ENCODE measurements at regions of chr6 and their contacts with region 1.

Region 1: DNA sequence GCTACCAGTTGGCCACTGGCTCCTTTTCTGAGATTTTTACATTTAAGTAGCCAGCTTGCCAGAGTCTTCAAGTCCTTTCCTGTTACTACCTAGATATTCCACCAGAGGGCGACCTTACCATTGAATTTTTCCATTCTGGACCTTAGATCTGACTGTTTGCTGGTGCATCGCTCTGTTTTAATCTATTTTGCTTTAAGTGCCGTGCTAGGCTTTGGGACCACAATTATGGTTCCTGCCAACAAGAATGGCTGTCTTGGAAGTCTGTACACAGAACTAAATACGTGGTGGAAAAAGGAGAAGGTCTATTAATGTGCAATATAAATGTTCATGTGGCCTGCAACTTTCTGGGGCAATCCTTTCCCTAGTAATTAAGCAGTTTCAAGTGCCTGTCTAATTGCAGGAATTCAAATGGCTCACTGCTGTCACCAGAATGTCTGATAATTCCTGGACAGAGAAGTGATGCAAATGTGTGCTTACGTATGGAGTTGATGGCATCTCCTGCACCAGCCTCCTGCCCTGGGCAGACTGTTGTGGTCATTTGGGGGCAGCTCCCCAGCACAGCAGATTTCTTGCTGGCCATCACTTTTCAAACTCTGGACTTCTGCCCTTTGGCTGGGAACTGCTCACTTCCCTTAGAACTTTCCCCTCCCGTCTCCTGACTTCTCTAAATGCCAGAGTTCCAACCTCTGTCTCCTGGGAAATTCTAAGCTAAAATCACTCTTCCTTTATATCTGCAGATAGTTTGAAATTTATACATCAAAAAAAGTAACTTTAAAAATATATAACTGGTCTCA is 5.6 kb upstream of the HLA-DOA start:
- DNase-seq: peak in 1 of 2 donors; percentile 66
- H3K4me3 ChIP-seq: no peak overlapping the region
- CTCF ChIP-seq: peak in 1 of 3 donors; percentile 62
- POLR2A ChIP-seq: no peak

Region 2: GRCh38 chr6:33000055-33000454 is 15.0 kb before region 1 on chr6:
- intact Hi-C with region 1: no loop called
- DNase-seq: no peak
- H3K4me3 ChIP-seq: no peak overlapping the region
- CTCF ChIP-seq: no peak
- POLR2A ChIP-seq: no peak

Region 3: GRCh38 chr6:33147807-33148666 is 133.0 kb after region 1 on chr6:
- intact Hi-C with region 1: loop called (anchors 10 kb)
- DNase-seq: no peak
- H3K4me3 ChIP-seq: no peak overlapping the region
- CTCF ChIP-seq: no peak
- POLR2A ChIP-seq: no peak

Region 4: GRCh38 chr6:33248925-33249731 is 234.1 kb after region 1 on chr6:
- intact Hi-C with region 1: loop called (anchors 10 kb)
- DNase-seq: peak; percentile 98 to 99
- H3K4me3 ChIP-seq: peak overlapping the region; percentile 44
- CTCF ChIP-seq: no peak
- POLR2A ChIP-seq: peak in 1 of 2 donors; percentile 37